Right ventricle myocardium inferior (tissue), 1 donor: ENCODE measurements at regions of chr7 and their contacts with region 1.

Region 1: DNA sequence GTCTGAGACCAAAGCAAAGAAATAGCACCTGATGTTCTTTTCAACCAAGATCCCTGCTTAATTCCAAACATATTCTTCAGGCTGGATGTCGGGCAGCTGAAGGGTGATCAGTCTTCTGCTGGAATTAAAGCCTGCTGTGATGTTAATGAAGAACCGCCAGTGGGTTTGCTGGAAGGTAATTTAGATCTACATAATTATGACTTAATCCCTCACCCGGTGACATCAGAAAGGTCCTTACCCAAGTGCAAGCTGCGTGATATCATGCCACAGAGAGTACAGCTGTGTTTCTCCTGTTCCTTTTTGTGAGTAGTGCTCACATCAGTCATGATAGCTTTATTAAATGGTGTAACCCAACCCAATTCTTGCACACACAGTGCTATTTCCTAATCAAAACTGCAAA is 29.1 kb upstream of the LRGUK start:
- DNase-seq: no peak
- ATAC-seq: no peak

Region 2: DNA sequence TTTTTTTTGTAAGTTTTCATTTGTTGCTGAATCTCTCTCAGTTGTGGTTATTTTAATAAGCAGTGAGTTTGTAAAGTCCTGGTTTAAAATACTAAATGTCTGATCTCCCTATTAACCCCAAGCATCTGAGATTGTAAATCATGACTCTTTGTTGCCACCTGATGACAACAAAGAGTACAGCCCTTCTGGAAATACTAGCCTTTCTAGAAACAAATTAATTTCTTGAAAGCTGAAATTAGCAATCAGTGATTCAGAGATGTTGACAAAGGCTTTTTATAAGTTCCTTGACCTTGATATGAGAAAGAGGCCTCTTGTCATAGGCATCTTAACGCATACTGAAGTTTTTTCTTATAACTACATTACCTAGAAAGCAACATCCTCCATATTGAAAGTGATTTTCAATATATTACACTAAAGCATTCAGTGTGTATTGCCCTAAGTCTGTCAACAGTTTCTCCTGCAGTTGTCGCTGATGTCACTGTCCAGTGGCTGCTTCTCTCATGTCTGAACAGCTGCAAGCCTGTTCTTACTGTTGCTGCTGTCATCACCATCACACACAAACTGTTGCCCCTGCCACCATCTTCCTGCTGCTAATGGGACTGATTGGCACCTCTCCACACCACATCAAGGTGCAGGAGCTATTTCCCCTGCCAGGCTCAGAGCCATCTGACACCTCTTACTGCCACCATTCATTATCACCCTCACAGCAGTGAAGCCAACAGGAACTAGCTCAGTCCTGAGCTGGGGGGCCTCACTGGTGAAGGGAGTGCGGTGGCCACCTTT is 66.0 kb before region 1 on chr7:
- intact Hi-C with region 1: no loop called
- DNase-seq: no peak
- ATAC-seq: peak; percentile 84

Region 3: DNA sequence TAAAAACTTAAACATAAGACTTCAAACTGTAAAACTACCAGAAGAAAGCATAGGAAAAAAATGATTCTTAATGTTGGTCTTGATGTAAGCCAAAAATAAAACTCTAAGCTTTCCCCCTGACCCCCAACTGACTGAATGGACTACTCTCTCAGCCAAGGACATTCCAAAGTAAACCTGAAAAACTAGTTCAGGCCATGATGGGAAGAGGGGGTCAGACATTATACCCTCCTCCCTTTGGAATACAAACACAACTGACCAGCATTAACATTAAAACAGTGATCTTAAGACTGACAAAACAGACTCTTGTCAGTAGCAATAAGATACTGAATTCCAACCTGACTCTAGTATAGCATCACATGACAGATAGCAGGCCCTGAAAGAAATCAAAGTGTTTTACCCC is 15.6 kb after region 1 on chr7:
- intact Hi-C with region 1: loop called (anchors 1 kb)
- DNase-seq: no peak
- ATAC-seq: no peak

Region 4: DNA sequence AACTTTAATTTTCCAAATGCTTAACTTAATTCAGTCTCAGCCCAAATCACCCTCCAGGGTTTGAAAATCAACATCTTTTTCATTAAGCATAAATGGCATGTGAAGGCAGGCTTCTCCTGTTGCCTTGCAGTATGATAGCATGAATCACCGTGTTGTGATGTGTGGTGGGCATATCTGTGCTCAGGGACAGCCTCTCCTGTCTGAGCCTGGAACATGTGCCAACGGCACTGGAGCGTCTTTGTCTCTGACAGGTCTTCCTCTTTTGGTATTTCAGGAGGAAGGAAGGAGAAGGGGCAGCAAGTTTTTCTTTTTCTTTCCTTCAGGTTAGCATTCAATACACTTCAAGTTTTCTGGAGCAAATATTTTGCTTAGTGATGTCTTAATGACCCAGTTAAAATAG is 86.7 kb after region 1 on chr7:
- intact Hi-C with region 1: no loop called
- DNase-seq: no peak
- ATAC-seq: no peak